Prostate gland (tissue), 2 donors: ENCODE measurements at regions of chr20 and their contacts with region 1.

Region 1: GRCh38 chr20:31605031-31605901 is at the start of gene ID1:
- DNase-seq: peak; percentile 98
- H3K4me3 ChIP-seq: peak within 1 kb of the TSS; percentile 69 to 71
- H3K27ac ChIP-seq: peak within 1 kb of the TSS; percentile 85 to 86
- H3K4me1 ChIP-seq: peaks cover 16% of the 10 kb centered on the region
- H3K27me3 ChIP-seq: no peaks in the 10 kb centered on the region
- CTCF ChIP-seq: peak in 2 of 4 experiments; percentile 6 to 13
- POLR2A ChIP-seq: peak; percentile 97
- total RNA-seq, gene ID1: 356 to 514 TPM

Region 2: GRCh38 chr20:31572701-31573554 is 32.3 kb before region 1 on chr20:
- intact Hi-C with region 1: loop called (anchors 2 kb)
- DNase-seq: peak; percentile 93
- H3K4me3 ChIP-seq: peak overlapping the region; percentile 37 to 48
- H3K27ac ChIP-seq: peak overlapping the region; percentile 85 to 89
- H3K4me1 ChIP-seq: peaks cover 6% of the 10 kb centered on the region
- H3K27me3 ChIP-seq: no peaks in the 10 kb centered on the region
- CTCF ChIP-seq: peak in 2 of 4 experiments; percentile 12 to 21
- POLR2A ChIP-seq: peak; percentile 50

Region 3: DNA sequence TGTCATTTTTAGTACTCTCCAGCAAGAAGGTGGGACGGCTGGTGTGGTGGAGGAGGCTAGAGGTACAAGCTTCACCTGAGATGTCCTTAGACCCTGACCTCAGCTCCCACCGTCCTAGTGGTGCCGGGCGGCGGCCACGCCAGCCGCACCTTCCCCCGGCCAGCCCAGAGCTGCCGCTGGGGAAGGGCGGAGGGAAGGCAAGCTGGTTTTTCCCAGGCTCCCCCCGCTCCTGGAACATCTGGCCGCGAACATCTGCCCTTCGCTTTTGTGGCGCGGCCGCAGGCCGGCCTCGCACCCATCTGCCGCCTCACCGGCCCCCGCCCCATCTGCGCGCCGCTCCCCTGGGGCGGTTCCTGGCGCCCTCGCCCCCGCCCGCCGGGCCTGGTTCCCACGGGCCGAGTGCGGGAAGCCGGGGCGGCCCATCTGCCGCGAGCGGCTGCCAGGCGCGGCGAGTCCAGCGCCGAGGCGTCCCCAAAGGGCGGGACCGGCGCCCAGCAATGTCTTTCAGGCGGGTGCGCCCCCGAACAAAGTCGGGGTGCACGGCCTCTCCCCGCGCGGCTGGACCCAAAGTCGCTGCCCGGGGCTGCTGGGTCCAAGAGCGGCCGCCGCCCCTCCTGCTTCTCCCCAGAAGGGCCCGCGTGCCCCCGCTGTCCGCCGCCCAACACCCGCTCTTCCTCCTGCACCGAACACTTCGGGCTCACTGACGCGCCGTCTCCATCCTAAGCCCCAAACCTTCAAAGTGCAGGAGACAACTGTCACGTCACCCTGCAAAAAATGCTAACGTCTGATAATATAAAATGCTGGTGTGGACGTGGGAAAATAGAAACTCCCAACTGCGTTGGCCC is 17.5 kb before region 1 on chr20:
- intact Hi-C with region 1: no loop called
- DNase-seq: no peak
- H3K4me3 ChIP-seq: peak overlapping the region; percentile 36 to 39
- H3K27ac ChIP-seq: peak overlapping the region; percentile 54 to 64
- H3K4me1 ChIP-seq: no peaks in the 10 kb centered on the region
- H3K27me3 ChIP-seq: no peaks in the 10 kb centered on the region
- CTCF ChIP-seq: no peak
- POLR2A ChIP-seq: peak; percentile 39

Region 4: DNA sequence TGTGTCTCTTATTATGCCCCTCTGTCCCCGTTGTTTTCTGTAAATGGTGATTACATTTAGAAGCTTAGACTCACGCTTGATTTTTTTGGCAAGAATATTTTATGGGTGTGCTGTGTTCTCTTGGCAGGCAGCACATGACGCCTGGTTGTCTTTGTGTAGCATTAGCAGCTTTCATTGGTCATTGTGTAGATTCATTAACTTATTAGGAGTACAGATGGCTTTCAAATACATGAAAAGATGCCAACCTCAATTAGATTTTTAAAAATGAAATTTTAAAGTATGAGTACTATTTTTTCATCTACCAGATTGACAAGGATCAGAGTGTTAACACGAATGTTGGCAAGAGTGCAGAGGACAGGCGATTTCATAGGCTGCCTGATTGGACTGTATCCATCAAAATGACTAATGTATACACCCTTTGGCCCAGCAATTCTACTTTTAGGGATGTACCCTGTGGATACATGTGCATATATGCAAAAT is 47.7 kb after region 1 on chr20:
- intact Hi-C with region 1: no loop called
- DNase-seq: peak; percentile 51
- H3K4me3 ChIP-seq: no peak overlapping the region
- H3K27ac ChIP-seq: peak overlapping the region; percentile 3 to 45
- H3K4me1 ChIP-seq: peaks cover 5% of the 10 kb centered on the region
- H3K27me3 ChIP-seq: no peaks in the 10 kb centered on the region
- CTCF ChIP-seq: no peak
- POLR2A ChIP-seq: no peak